ENCODE measurements at regions of chr10 and their contacts with region 1.

Region 1: GRCh38 chr10:63261496-63261895 is 128.4 kb downstream of the NRBF2 start:
- DNase-seq: no peak
- ATAC-seq: no peak
- H3K4me3 ChIP-seq: no peak overlapping the region
- H3K4me3 Mint-ChIP-seq: peak overlapping the region; percentile 28 to 58 (median 54)
- H3K27ac ChIP-seq: no peak overlapping the region
- H3K27ac Mint-ChIP-seq: peak overlapping the region in 1 of 2 donors; percentile 55
- H3K4me1 ChIP-seq: peaks cover 21 to 64% of the 10 kb centered on the region in 2 experiments
- H3K4me1 Mint-ChIP-seq: peaks cover 64 to 83% (median 77%) of the 10 kb centered on the region in 3 donors
- H3K27me3 ChIP-seq: no peaks in the 10 kb centered on the region
- H3K27me3 Mint-ChIP-seq: no peaks in the 10 kb centered on the region

Region 2: GRCh38 chr10:62244780-62245467 is 1016.6 kb before region 1 on chr10:
- CTCF ChIA-PET with region 1: no interaction called
- POLR2A ChIA-PET with region 1: interaction called in 1 of 2 experiments, 16 read pairs
- DNase-seq: peak in 31 of 35 experiments; percentile 2 to 82 (median 37)
- ATAC-seq: peak; percentile 76 to 89 (median 81)
- H3K4me3 ChIP-seq: no peak overlapping the region
- H3K4me3 Mint-ChIP-seq: no peak overlapping the region
- H3K27ac ChIP-seq: no peak overlapping the region
- H3K27ac Mint-ChIP-seq: no peak overlapping the region
- H3K4me1 ChIP-seq: peaks cover 3 to 20% of the 10 kb centered on the region in 2 experiments
- H3K4me1 Mint-ChIP-seq: peaks cover 27 to 33% (median 32%) of the 10 kb centered on the region in 3 donors
- H3K27me3 ChIP-seq: no peaks in the 10 kb centered on the region
- H3K27me3 Mint-ChIP-seq: no peaks in the 10 kb centered on the region

Region 3: GRCh38 chr10:62980687-62981086 is 280.8 kb before region 1 on chr10:
- CTCF ChIA-PET with region 1: no interaction called
- POLR2A ChIA-PET with region 1: no interaction called
- DNase-seq: no peak
- ATAC-seq: no peak
- H3K4me3 ChIP-seq: no peak overlapping the region
- H3K4me3 Mint-ChIP-seq: no peak overlapping the region
- H3K27ac ChIP-seq: no peak overlapping the region
- H3K27ac Mint-ChIP-seq: no peak overlapping the region
- H3K4me1 ChIP-seq: no peaks in the 10 kb centered on the region
- H3K4me1 Mint-ChIP-seq: no peaks in the 10 kb centered on the region
- H3K27me3 ChIP-seq: no peaks in the 10 kb centered on the region
- H3K27me3 Mint-ChIP-seq: peaks cover 3 to 6% of the 10 kb centered on the region in 2 donors

Region 4: DNA sequence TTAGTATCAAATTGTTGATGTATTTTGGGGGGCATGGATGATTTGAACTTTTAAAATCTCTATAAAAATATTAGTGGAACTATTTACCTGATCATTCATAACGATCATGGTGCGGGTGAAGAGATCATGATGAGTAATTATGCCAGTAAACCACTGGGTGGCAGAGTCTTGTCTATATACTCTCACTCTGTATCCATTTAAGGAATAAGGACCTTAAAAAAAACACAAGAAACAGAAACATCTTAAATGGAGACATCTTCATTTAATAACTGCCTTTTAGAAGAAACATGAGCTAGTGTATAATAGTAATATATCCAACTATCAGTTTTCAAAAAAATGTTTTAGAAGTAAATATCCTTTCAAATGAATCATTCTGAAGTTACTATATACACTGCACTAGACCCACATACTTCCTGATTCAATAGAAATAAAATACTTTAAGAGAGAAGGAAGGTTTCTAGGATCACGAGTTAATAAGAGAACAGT is 44.3 kb before region 1 on chr10:
- CTCF ChIA-PET with region 1: interaction called, 5 to 12 read pairs
- POLR2A ChIA-PET with region 1: interaction called in 1 of 2 experiments, 4 read pairs
- DNase-seq: peak in 8 of 35 experiments; percentile 6 to 73 (median 24)
- ATAC-seq: peak; percentile 77 to 85 (median 80)
- H3K4me3 ChIP-seq: no peak overlapping the region
- H3K4me3 Mint-ChIP-seq: no peak overlapping the region
- H3K27ac ChIP-seq: no peak overlapping the region
- H3K27ac Mint-ChIP-seq: peak overlapping the region; percentile 55 to 73
- H3K4me1 ChIP-seq: peaks cover 6 to 19% of the 10 kb centered on the region in 2 experiments
- H3K4me1 Mint-ChIP-seq: peaks cover 55 to 64% (median 62%) of the 10 kb centered on the region in 3 donors
- H3K27me3 ChIP-seq: no peaks in the 10 kb centered on the region
- H3K27me3 Mint-ChIP-seq: no peaks in the 10 kb centered on the region

Region 5: GRCh38 chr10:63236113-63236935 is 25.2 kb before region 1 on chr10:
- CTCF ChIA-PET with region 1: interaction called in 1 of 2 experiments, 3 read pairs
- POLR2A ChIA-PET with region 1: interaction called, 7 to 14 read pairs
- DNase-seq: peak in 1 of 35 experiments; percentile 46
- ATAC-seq: peak; percentile 53 to 94 (median 86)
- H3K4me3 ChIP-seq: no peak overlapping the region
- H3K4me3 Mint-ChIP-seq: no peak overlapping the region
- H3K27ac ChIP-seq: no peak overlapping the region
- H3K27ac Mint-ChIP-seq: peak overlapping the region; percentile 61 to 74
- H3K4me1 ChIP-seq: peaks cover 24 to 29% of the 10 kb centered on the region in 2 experiments
- H3K4me1 Mint-ChIP-seq: peaks cover 55 to 69% (median 69%) of the 10 kb centered on the region in 3 donors
- H3K27me3 ChIP-seq: no peaks in the 10 kb centered on the region
- H3K27me3 Mint-ChIP-seq: no peaks in the 10 kb centered on the region